Left colon (tissue), 2 donors: ENCODE measurements at regions of chr12 and their contacts with region 1.

Region 1: GRCh38 chr12:51531978-51532497 is 59.0 kb upstream of the SCN8A start:
- DNase-seq: peak; percentile 55 to 78
- ATAC-seq: peak; percentile 84

Region 2: DNA sequence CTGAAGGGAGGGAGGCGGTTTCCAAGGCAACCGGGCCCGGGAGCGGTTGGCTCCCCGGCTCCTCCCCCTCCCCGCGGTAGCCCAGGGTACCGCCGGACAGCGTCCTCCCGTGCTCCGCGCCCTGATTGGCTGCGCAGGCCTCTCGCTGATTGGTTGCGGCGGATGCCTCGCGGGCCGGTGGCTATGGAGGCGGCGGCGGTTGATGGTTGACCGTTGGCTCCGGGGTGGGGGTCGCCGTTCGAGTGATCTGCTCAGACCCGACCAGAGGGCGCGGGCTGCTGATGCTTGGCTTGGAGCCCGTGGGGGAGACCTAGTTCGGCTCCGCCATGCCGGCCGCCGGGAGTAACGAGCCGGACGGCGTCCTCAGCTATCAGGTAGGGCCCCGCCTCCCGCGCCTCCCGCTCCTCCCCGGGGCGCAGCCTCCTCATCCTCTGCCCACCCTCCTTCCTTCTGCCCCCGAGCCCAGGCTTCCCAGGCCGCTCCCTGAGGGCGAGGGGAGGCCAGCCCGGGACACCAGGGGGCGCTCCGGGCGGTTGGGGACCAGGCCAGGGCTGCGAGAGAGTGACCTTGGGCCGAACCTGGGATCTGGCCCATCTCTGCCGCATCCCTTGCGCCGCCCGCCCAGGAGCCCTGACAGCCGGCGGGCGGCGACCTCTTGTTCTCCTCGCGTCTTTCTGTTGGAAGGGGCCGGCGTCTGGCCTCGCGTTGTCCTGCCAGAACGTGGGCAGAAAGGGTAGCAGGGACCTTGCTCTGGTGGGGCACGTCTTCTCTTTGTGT is 107.2 kb before region 1 on chr12 and contains the start of gene SLC4A8:
- intact Hi-C with region 1: loop called (anchors 2 to 10 kb)
- DNase-seq: peak; percentile 76 to 85
- ATAC-seq: peak; percentile 86
- total RNA-seq, gene SLC4A8: 0.67 to 1.8 TPM

Region 3: GRCh38 chr12:51823875-51824565 is 292.0 kb after region 1 on chr12:
- intact Hi-C with region 1: no loop called
- DNase-seq: no peak
- ATAC-seq: peak; percentile 56